Activated CD8-positive, alpha-beta memory T cell treated with anti-CD3 and anti-CD28 coated beads, Interleukin-2, amount 10 ng/mL, durations not matched to agents 7 days and 5 days (primary cell): ENCODE measurements at regions of chr1 and their contacts with region 1.

Region 1: GRCh38 chr1:40059338-40059959 is 18.9 kb downstream of the CAP1 start:
- DNase-seq: peak; percentile 51
- ATAC-seq: peak; percentile 71
- H3K4me3 Mint-ChIP-seq: peak overlapping the region; percentile 62
- H3K27ac Mint-ChIP-seq: peak overlapping the region; percentile 86
- H3K4me1 Mint-ChIP-seq: peaks cover 87% of the 10 kb centered on the region
- H3K27me3 Mint-ChIP-seq: no peaks in the 10 kb centered on the region

Region 2: DNA sequence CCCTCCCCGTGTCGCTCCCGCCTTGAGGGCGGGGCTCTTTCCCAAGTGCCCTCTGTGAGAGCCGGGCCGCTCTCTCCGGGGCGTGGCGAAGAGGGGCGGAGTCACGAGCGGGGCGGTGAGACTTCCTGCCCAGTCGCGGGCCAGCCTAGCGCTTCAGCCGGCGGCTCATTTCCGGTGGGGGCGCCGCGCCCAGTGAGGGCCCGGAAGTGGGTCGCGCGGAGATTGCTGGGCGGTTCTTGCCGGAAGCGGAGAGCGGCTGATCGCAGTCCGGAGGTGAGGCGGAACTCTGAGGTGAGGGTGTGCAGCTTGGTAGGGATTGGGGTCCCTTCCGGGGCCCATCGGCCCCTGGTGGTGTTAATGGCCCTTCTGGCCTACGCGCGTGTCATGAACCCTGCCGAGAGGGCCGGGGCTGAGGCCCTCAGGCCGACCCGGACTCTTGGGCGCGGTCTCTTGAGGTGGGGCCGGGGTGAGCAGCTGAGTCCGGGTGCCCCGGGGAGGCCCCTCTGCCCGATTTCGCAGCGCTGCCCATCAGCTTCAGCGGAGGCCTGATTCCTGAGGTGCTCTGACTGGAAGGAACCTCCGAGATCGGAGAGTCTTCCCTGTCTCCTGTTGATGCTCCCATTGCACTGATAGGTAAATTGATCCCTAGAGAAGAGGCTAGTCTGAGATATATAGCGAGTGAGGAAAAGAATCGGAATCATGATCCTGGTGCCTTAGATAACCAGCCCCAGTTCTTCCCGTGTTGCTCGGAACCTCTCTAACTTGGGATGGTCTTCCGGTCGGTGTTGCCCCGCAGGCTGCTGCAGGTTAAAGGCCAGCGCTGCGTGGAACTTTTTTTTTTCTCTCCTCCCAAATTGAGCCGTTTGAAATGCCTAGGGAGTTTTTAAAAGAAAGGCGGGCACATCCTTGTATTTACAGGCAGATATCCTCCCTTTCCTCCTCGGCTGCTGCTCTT is 18.7 kb before region 1 on chr1 and contains the start of gene CAP1:
- CTCF ChIA-PET with region 1: interaction called, 11 read pairs
- DNase-seq: peak; percentile 100
- ATAC-seq: peak; percentile 84
- H3K4me3 Mint-ChIP-seq: peak within 1 kb of the TSS; percentile 99
- H3K27ac Mint-ChIP-seq: peak within 1 kb of the TSS; percentile 97
- H3K4me1 Mint-ChIP-seq: peaks cover 57% of the 10 kb centered on the region
- H3K27me3 Mint-ChIP-seq: no peaks in the 10 kb centered on the region
- total RNA-seq, gene CAP1: 647 to 727 TPM

Region 3: DNA sequence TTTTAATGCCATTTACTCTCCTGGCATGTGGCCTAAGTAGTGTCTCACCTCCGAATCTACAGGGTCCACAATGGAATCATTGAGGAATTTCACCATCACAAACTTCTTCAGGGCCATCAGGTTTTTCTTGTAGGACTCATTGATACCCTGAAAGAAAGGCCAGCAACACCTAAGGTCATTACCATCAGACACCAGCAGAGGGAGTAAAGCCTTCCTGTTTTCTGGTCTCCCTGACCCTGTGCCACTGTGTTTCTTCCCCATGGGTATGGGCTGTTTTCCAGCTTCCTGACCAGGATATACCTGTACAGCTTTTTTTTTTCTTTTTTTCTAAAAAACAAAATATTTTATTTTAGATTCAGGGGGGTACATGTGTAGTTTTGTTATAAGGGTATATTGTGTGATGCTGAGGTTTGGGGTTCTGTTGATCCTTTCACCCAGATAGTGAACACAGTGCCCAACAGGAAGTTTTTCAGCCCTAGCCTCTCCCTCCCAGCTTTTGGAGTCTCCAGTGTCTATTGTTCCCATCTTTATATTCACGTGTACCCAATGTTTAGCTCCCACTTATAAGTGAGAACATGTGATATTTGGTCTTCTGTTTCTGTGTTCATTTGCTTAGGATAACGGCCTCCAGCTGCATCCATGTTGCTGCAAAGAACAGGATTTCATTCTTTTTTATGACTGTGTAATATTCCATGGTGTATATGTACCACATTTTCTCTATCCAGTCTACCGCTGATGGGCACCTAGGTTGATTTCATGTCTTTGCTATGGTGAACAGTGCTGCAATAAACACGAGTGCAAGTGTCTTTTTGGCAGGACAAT is 19.3 kb after region 1 on chr1:
- CTCF ChIA-PET with region 1: interaction called, 19 read pairs
- DNase-seq: peak; percentile 68
- ATAC-seq: peak; percentile 68
- H3K4me3 Mint-ChIP-seq: no peak overlapping the region
- H3K27ac Mint-ChIP-seq: no peak overlapping the region
- H3K4me1 Mint-ChIP-seq: peaks cover 19% of the 10 kb centered on the region
- H3K27me3 Mint-ChIP-seq: no peaks in the 10 kb centered on the region